ENCODE measurements at regions of chr2 and their contacts with region 1.

Region 1: GRCh38 chr2:227862227-227862740 is 9.1 kb upstream of the DAW1 start:
- DNase-seq: no peak
- ATAC-seq: no peak
- H3K4me3 ChIP-seq: no peak overlapping the region
- H3K27ac ChIP-seq: peak overlapping the region in 1 of 10 donors; percentile 56
- H3K4me1 ChIP-seq: peaks cover 0 to 14% (median 0%) of the 10 kb centered on the region in 9 donors
- H3K27me3 ChIP-seq: no peaks in the 10 kb centered on the region
- CTCF ChIP-seq: peak in 8 of 9 donors; percentile 38 to 70 (median 50)

Region 2: DNA sequence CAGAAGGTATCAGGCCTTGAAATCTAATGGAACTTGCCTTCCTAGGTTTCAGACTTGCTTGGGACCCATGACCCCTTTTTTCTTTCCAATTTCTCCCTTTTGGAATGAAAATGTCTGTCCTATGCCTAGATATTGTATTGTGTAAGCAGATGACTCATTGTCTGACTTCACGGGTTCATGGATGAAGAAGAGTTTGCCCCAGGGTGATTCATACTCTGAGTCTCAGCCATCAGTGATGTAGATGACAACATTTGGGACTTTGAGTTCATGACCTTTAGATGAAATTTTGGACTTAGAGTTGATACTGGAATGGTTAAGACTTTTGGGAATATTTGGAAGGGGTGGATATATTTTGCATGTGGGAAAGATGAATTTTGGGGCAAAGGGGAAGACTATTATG is 206.8 kb before region 1 on chr2:
- intact Hi-C with region 1: loop called in 3 of 10 experiments (anchors 10 kb)
- DNase-seq: no peak
- ATAC-seq: peak in 4 of 8 donors; percentile 24 to 93 (median 65)
- H3K4me3 ChIP-seq: no peak overlapping the region
- H3K27ac ChIP-seq: peak overlapping the region in 1 of 10 donors; percentile 71
- H3K4me1 ChIP-seq: peaks cover 0 to 27% (median 0%) of the 10 kb centered on the region in 9 donors
- H3K27me3 ChIP-seq: peaks cover 0 to 4% (median 0%) of the 10 kb centered on the region in 7 donors
- CTCF ChIP-seq: no peak

Region 3: GRCh38 chr2:227661019-227661649 is 201.2 kb before region 1 on chr2:
- intact Hi-C with region 1: loop called in 3 of 10 experiments (anchors 10 kb)
- DNase-seq: peak in 1 of 2 donors; percentile 21
- ATAC-seq: peak in 1 of 8 donors; percentile 47
- H3K4me3 ChIP-seq: no peak overlapping the region
- H3K27ac ChIP-seq: no peak overlapping the region
- H3K4me1 ChIP-seq: peaks cover 0 to 15% (median 0%) of the 10 kb centered on the region in 9 donors
- H3K27me3 ChIP-seq: peaks cover 0 to 4% (median 0%) of the 10 kb centered on the region in 7 donors
- CTCF ChIP-seq: no peak

Region 4: DNA sequence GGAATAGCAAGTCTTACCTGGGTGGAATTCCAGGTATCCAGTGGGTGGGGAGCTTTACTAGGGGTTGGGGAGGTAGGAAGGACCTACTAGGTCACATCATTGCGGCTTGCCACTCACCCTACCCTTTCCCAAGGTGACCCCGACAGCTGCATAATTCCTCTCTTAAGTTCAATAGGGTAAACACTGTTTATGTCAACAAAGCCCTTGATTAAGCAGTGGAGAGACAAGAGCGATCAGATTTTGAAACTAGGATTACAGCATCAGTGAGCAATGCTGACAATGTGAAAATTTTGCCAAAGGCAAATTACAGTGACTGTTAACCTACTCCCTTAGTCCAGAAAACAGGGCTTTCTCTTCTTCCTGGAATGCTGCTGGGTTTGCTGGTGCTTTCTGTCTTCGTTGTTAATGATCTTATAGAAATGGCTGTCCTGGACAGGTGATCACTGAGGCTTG is 159.0 kb before region 1 on chr2:
- intact Hi-C with region 1: no loop called
- DNase-seq: no peak
- ATAC-seq: peak in 1 of 8 donors; percentile 35
- H3K4me3 ChIP-seq: no peak overlapping the region
- H3K27ac ChIP-seq: no peak overlapping the region
- H3K4me1 ChIP-seq: no peaks in the 10 kb centered on the region
- H3K27me3 ChIP-seq: peaks cover 0 to 9% (median 0%) of the 10 kb centered on the region in 7 donors
- CTCF ChIP-seq: no peak

Region 5: DNA sequence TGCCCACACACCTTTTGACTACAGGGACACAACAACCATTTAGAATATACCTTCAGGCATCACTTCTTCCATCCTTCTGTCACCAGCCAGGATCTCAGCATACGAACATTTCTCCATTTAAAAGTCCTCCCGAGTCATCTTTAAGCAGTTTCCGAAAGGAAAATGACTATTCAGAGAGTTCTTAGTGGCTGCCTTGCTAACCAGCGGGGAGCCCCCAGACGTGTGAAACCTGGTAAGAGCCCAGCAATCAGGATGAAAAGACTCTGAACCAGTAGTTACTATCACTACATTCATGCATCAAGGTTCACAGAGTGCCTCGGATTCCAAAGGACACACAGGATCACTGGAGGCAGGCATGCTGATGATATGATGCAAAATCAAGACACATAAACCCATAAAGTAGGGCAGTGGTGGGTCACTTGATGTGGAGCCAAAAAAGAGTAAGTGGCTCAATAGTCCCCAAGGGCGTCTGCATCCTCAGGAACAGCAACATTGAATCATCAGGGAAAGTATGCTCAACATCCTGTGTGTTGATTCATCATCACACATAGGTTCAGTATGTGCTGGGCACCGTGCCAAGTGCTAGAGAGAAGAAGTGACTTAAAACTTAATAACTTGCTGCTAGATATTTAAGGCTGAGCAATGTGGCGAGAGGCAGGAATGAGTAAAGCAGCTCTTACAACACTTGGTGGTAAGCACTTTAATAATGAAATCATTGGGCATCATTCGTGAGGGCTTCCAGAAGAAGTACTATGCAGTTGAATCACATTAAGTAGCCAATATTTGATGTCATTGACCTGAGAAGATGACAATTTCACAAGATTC is 44.2 kb before region 1 on chr2:
- intact Hi-C with region 1: no loop called
- DNase-seq: peak; percentile 24 to 50
- ATAC-seq: peak in 6 of 8 donors; percentile 29 to 86 (median 78)
- H3K4me3 ChIP-seq: no peak overlapping the region
- H3K27ac ChIP-seq: peak overlapping the region in 2 of 10 donors; percentile 68 to 74
- H3K4me1 ChIP-seq: peaks cover 0 to 40% (median 4%) of the 10 kb centered on the region in 9 donors
- H3K27me3 ChIP-seq: peaks cover 0 to 21% (median 16%) of the 10 kb centered on the region in 7 donors
- CTCF ChIP-seq: no peak